Calu3 (cell line): ENCODE measurements at regions of chr1 and their contacts with region 1.

Region 1: DNA sequence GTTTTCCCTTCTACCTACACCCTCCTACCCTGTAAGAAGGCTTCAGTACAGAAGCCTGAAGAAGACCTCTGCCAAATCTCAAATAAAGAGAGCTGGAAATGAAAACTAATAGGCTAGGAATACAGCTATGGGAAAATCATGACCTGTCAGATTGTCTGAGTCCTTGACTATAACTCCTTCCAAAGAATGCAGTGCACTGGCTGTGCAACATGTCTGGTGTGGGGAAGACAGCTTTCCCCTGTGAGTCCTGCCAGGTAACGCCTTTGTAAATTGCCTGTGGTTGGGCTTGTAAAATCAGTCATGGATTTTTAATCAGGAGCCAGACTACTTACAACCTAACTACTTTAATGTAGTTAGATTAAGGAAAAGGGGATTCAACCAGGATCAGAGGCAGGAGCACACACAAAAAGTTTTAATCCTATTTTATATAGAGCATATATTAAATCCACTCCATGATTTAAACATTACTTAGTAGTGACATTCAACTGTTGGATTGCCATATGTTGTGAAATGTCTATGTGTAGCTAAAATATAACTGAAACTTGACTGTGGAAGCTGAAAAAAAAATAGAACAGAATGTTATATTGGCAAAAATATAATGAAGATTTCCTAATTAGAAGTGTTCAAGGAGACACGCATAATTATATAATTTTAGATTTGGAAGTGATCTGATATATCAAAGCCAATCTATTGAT is 1667.8 kb downstream of the KCNT2 start:
- DNase-seq: no peak
- H3K4me3 Mint-ChIP-seq: no peak overlapping the region
- H3K27ac Mint-ChIP-seq: no peak overlapping the region
- H3K4me1 Mint-ChIP-seq: peaks cover 9% of the 10 kb centered on the region
- H3K27me3 Mint-ChIP-seq: no peaks in the 10 kb centered on the region
- CTCF ChIP-seq: no peak

Region 2: DNA sequence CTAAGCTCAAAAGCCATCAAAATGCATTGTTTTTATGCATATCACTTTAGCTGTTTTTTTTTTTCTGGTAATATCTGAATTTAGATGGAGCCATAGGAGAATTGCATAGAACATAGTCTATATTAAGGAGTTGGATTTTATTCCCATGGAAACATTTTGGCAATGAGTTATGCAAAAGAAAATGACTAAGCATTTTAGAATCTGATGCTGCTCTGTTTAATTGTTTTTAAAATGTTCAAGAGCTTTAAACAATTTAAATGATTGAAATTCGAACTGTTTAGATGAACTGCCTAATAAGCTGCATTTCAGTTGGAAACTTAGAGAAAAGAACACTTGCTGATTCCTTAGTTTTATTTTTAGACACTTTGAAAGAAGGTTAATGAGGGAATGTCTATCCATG is 222.5 kb before region 1 on chr1:
- CTCF ChIA-PET with region 1: no interaction called
- intact Hi-C with region 1: loop called (anchors 10 kb)
- DNase-seq: no peak
- H3K4me3 Mint-ChIP-seq: no peak overlapping the region
- H3K27ac Mint-ChIP-seq: no peak overlapping the region
- H3K4me1 Mint-ChIP-seq: no peaks in the 10 kb centered on the region
- H3K27me3 Mint-ChIP-seq: no peaks in the 10 kb centered on the region
- CTCF ChIP-seq: no peak